GM10248 (cell line): ENCODE measurements at regions of chr5 and their contacts with region 1.

Region 1: DNA sequence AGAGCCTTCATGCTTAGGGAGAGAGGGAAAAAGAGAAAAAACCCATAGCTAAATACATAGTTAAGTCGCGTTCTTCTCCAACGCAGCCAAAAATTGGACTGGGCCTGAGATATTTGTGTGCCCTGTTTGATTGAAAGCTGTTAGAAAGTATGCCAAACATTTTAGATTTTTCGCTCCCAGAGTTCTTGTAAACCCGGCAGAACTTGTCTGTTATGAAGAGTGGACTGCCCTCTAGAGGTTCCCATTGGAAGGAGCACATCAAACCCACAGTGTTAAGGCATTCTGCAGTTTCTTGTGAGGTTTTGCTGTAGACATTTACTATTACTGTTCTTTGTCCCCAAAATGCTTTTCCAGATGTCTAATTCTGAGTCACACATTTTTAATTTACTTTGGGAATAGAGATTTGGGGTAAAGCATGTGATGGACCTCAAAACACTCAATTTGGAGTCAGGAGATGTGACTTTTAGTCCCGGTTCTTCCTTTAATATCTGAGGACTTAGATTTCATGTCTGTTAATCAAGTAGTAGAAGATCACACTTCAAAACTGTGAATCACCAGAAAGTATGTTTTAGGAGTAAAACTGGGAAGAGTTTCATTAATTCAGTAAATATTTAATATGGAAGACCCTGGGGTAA is 96.6 kb downstream of the PCSK1 start:
- DNase-seq: peak; percentile 35
- CTCF ChIP-seq: peak; percentile 84

Region 2: DNA sequence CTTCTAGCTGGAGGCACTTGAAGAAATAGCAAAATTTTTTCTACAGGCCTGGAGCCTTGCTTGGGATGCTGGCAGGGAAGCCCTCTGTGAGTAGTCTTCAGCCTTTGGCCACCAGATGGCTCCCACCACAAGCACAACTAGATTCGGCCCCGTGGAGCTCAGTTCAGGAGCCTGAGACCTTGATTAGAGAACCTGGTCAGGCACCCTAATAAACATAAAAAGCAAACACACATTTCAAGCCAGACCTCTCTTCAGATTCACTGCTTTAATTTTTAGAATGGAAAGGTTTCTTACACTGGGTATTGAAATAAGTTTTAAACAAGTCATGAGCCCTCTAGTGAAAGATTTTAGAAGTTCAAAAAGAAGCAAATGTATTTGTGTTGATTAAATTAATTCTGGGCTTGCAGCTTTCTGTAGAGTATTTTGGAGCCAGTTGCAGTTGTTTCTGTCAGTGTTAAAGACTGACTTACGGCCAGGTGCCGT is 555.3 kb before region 1 on chr5:
- CTCF ChIA-PET with region 1: interaction called, 20 read pairs
- POLR2A ChIA-PET with region 1: no interaction called
- DNase-seq: peak; percentile 74
- CTCF ChIP-seq: peak; percentile 82

Region 3: GRCh38 chr5:95858661-95859326 is 477.7 kb before region 1 on chr5:
- CTCF ChIA-PET with region 1: interaction called, 119 read pairs
- POLR2A ChIA-PET with region 1: no interaction called
- DNase-seq: peak; percentile 89
- CTCF ChIP-seq: peak; percentile 98

Region 4: DNA sequence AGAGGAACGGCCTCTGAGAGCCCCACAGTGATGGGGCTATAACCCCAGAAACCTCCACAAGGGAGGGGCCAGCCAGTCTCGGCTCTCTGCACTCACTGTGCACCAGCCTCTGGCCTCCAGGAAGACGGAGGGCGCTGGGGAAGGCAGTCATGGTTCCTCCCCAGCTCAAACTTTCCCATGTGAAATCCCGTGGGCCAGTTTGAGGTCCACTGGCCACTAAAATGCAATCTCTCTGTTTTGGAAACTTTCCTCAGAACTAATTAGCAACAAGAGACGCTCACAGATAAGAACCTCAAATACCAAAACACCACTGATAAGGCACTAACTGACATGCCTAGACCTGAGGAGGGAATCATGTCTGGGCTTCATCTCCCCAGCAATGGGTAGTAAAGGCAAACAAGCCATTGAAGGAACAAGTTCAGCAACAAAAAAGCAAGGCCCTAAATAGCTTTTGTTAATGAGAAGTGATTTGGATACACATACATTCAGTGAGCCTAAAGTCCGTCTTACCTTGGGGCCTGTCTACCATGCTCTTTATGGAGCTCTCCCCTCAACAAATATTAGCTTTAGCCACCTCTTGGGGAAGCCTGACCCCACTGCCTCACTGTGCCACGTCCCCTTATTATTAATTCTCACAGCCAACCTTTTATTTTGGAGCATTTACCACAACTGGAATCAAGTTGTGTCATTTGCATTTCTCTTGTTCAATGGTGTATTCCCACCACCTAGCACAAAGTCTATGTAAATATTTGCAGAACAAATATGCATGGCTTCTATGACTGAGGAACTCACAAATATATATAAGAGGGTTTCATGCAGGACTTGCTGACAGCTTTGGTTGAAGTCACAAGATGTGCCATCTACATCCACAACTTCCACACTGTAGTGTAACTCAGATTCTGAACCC is 457.8 kb before region 1 on chr5:
- CTCF ChIA-PET with region 1: interaction called, 12 read pairs
- POLR2A ChIA-PET with region 1: no interaction called
- DNase-seq: no peak
- CTCF ChIP-seq: no peak

Region 5: GRCh38 chr5:95961617-95962474 is 374.6 kb before region 1 on chr5 and contains the start of gene ELL2:
- CTCF ChIA-PET with region 1: interaction called, 19 read pairs
- POLR2A ChIA-PET with region 1: no interaction called
- DNase-seq: peak; percentile 95
- CTCF ChIP-seq: no peak

Region 6: GRCh38 chr5:96297290-96297689 is 39.2 kb before region 1 on chr5:
- CTCF ChIA-PET with region 1: interaction called, 10 read pairs
- POLR2A ChIA-PET with region 1: no interaction called
- DNase-seq: no peak
- CTCF ChIP-seq: no peak

Region 7: GRCh38 chr5:96601811-96602244 is 265.4 kb after region 1 on chr5:
- CTCF ChIA-PET with region 1: interaction called, 283 read pairs
- POLR2A ChIA-PET with region 1: no interaction called
- DNase-seq: peak; percentile 66
- CTCF ChIP-seq: peak; percentile 73